Activated CD4-positive, alpha-beta T cell treated with anti-CD3 and anti-CD28 coated beads, Interleukin-2, amount 10 ng/mL, durations not matched to agents 24 days and 14 days (primary cell): ENCODE measurements at regions of chr4 and their contacts with region 1.

Region 1: GRCh38 chr4:98446499-98447375 is 185.6 kb downstream of the RAP1GDS1 start:
- DNase-seq: peak; percentile 87
- H3K4me3 Mint-ChIP-seq: peak overlapping the region; percentile 78
- H3K27ac Mint-ChIP-seq: peak overlapping the region; percentile 96
- H3K4me1 Mint-ChIP-seq: peaks cover 39% of the 10 kb centered on the region
- H3K27me3 Mint-ChIP-seq: no peaks in the 10 kb centered on the region

Region 2: GRCh38 chr4:98143001-98143899 is 303.5 kb before region 1 on chr4 and contains the start of gene STPG2:
- intact Hi-C with region 1: loop called (anchors 10 kb)
- DNase-seq: peak; percentile 98
- H3K4me3 Mint-ChIP-seq: peak within 1 kb of the TSS; percentile 95
- H3K27ac Mint-ChIP-seq: peak within 1 kb of the TSS; percentile 96
- H3K4me1 Mint-ChIP-seq: peaks cover 11% of the 10 kb centered on the region
- H3K27me3 Mint-ChIP-seq: peaks cover 14% of the 10 kb centered on the region
- total RNA-seq, gene STPG2: not detected in 2 replicates

Region 3: DNA sequence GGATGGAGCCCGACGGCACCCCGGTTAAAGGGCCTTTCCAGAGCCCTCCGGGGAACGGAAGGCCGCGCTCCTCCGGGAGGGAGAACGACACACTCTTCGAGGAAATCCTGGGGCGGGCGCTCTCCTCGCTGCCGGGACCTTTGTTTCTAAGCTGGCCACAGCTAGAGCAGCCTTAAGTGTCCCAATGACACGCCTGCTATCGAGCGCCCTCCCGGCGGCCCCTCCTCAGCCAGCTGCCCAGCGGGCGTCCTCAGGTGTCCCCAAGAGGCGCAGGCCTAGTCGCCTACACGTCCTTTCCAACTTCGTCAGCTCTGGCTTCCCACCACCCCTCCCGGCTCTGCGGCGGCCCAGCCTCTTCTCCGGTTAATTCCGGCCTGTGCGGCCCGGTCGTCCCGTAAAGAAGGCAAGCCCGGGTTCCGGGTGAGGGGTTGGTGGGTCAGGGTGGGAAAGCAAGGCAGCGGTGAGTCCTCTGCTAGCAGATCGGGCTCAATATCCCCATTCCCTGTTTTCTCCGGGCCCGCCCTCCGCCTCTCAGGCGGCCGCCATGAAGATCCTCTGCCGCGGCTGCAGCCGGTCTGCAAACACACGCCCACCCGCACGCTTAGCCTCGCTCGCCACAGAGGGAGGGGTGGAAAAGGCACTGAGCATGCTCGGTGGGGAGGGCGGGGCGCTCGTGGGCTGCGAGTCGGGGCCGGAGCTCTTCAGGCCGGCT is 186.0 kb before region 1 on chr4:
- intact Hi-C with region 1: loop called (anchors 1 kb)
- DNase-seq: peak; percentile 97
- H3K4me3 Mint-ChIP-seq: peak overlapping the region; percentile 95
- H3K27ac Mint-ChIP-seq: peak overlapping the region; percentile 96
- H3K4me1 Mint-ChIP-seq: peaks cover 35% of the 10 kb centered on the region
- H3K27me3 Mint-ChIP-seq: peaks cover 4% of the 10 kb centered on the region

Region 4: DNA sequence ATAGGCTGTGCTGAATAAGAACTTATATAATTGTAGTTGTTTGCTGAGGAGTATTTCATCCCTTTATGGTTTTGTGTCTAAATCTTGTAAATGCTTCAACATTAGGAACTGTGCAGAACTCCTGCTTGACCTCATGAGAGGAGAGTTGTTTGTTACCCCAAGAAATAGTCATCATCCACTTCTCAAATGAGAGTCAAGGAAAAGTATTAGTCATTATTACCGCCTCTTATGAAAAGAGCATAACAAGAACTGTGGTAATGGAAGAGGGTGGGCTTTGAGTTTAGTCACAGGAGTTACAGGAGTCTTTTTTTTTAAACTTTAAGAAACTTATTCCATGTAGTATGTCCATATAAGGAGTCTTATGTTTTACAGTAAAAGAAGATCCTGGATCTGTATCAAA is 52.6 kb before region 1 on chr4:
- intact Hi-C with region 1: no loop called
- DNase-seq: no peak
- H3K4me3 Mint-ChIP-seq: no peak overlapping the region
- H3K27ac Mint-ChIP-seq: no peak overlapping the region
- H3K4me1 Mint-ChIP-seq: peaks cover 1% of the 10 kb centered on the region
- H3K27me3 Mint-ChIP-seq: no peaks in the 10 kb centered on the region

Region 5: GRCh38 chr4:98406819-98407218 is 39.9 kb before region 1 on chr4:
- intact Hi-C with region 1: loop called (anchors 2 kb)
- DNase-seq: no peak
- H3K4me3 Mint-ChIP-seq: no peak overlapping the region
- H3K27ac Mint-ChIP-seq: no peak overlapping the region
- H3K4me1 Mint-ChIP-seq: peaks cover 12% of the 10 kb centered on the region
- H3K27me3 Mint-ChIP-seq: no peaks in the 10 kb centered on the region

Region 6: GRCh38 chr4:98467627-98468072 is 20.9 kb after region 1 on chr4:
- intact Hi-C with region 1: loop called (anchors 2 kb)
- DNase-seq: peak; percentile 92
- H3K4me3 Mint-ChIP-seq: peak overlapping the region; percentile 79
- H3K27ac Mint-ChIP-seq: peak overlapping the region; percentile 38
- H3K4me1 Mint-ChIP-seq: peaks cover 33% of the 10 kb centered on the region
- H3K27me3 Mint-ChIP-seq: no peaks in the 10 kb centered on the region

Region 7: DNA sequence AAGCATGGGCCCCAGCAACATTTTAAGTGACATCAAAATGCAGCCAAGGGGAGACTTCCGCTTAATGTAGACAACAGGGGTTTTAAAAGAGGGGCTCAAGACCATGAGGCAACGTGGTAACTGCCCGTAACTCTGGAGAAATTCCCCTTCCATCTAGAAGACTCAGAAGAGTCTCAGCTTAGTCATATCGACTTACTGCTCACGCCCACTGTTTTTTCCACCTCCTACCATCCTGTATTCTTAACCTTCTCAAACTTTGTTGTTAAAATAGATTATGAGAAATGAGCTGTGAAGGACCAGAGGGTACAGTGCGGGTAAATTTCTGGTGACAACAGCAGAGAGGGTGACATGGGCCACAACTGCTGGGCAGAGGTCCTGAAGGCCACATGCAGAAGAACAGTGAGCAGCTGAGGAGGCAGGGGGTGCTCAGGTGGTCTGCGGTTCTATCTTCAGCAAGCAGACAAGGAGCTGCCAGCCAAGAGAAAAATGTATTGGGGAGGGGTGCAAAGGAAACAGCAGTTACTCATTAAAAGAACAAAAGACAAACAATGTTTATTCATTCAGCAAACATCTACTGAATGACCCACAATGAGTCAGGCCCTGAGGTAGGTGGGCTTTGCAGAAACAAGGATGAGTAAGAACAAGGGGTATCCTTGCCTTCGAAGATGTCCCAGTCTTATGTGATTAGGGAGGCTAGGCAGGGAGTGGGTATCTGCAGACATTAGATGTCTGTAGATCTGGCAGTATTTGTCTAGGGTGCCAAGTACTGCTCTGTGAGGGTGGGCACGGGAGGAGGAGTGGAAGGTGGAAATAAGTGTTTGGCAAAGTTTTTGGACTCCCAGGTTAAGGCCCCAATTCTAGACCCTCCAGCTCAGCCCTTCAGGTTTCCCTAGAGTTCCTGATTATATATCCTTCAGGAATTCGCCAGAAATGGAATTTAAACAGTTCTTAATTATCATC is 36.4 kb after region 1 on chr4:
- intact Hi-C with region 1: loop called (anchors 1 kb)
- DNase-seq: peak; percentile 75
- H3K4me3 Mint-ChIP-seq: peak overlapping the region; percentile 80
- H3K27ac Mint-ChIP-seq: peak overlapping the region; percentile 99
- H3K4me1 Mint-ChIP-seq: peaks cover 79% of the 10 kb centered on the region
- H3K27me3 Mint-ChIP-seq: no peaks in the 10 kb centered on the region